ENCODE measurements at regions of chr6 and their contacts with region 1.

Region 1: DNA sequence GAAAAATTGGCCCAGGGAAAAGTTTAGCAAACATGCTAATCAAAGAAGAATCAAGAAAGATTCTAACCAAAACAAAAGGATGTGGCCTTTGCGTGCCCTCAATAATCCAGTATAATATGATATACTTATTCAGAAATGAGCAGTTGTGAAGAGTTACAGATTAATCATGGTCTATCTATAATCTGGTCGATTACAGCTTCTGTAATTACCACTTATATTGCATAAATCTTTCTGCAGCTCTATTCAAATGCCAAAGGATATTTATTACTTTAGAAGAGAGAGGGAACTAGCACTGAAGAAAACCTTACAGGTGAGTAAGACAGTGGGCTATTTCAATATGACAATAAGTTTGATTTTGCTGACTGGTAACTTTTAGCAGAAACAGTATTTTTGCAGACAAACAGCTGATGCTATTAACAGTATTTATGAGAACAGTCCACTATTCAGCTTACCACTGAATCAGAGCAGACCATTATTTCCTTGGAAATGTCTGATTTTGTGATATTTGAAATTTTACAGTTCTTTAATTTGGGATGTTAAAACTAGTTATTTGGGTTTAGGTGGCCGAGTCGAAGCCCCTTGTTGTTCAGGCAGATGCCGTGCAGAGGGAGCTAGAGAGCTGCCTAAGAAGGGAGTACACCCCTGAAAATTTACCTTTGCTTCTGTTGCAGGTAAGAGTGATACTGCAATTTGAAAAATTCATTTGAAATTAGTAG is 92.2 kb downstream of the CEP57L1 start:
- DNase-seq: peak; percentile 52 to 62 (median 59)
- H3K4me3 ChIP-seq: no peak overlapping the region
- H3K4me3 Mint-ChIP-seq: no peak overlapping the region
- H3K27ac ChIP-seq: no peak overlapping the region
- H3K27ac Mint-ChIP-seq: no peak overlapping the region
- H3K4me1 ChIP-seq: no peaks in the 10 kb centered on the region
- H3K4me1 Mint-ChIP-seq: peaks cover 0 to 5% (median 0%) of the 10 kb centered on the region in 4 donors
- H3K27me3 ChIP-seq: peaks cover 6% of the 10 kb centered on the region
- H3K27me3 Mint-ChIP-seq: peaks cover 3 to 10% of the 10 kb centered on the region in 2 donors

Region 2: DNA sequence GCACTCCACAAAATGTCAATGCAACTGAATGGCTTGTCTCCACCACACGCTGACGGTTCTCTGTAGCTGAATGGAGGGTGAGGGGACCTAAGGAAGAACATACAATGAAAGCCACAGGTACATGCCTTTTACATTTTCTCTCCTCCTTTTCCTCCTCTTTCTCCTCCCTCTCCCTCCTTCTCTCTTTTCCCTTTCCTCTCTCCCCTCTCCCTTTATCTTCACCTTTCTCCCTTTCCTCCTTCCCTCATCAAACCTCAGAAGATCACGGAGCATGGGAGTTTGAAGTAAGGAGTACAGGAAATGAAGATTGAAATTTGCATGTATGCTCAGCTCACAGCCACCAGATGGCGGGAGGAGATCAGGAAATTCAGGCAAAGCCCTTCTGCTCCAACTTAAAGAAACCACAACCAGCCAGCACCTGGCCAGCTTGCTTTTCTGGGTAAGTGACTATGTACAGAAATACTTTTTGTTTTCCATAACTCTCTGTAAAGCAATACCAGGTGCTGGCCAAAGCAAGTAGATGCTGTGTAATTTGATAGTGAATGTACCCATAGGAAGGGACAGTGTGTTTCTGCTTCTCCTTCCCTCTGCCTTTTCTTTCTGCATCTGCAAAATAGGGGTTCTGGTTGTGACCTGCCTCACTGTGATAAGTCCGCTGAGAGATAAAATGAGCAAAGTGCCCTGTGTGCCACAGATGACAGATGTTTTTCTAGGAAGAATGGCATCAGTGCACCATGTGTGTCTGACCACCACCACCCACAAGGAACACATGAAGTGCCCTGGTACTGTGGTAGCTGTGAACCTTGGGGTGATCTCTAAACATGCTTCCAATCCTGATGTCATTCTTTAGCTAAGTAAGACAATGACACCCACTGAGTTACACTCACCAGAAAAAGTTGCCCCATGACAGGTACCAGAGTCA is 645.5 kb before region 1 on chr6:
- CTCF ChIA-PET with region 1: interaction called, 5 read pairs
- POLR2A ChIA-PET with region 1: interaction called, 3 read pairs
- intact Hi-C with region 1: loop called (anchors 5 kb)
- DNase-seq: peak; percentile 71 to 74 (median 73)
- H3K4me3 ChIP-seq: no peak overlapping the region
- H3K4me3 Mint-ChIP-seq: peak overlapping the region in 4 of 8 donors; percentile 16 to 71 (median 56)
- H3K27ac ChIP-seq: no peak overlapping the region
- H3K27ac Mint-ChIP-seq: no peak overlapping the region
- H3K4me1 ChIP-seq: peaks cover 8% of the 10 kb centered on the region
- H3K4me1 Mint-ChIP-seq: peaks cover 6 to 17% (median 8%) of the 10 kb centered on the region in 4 donors
- H3K27me3 ChIP-seq: no peaks in the 10 kb centered on the region
- H3K27me3 Mint-ChIP-seq: peaks cover 4 to 6% of the 10 kb centered on the region in 2 donors

Region 3: DNA sequence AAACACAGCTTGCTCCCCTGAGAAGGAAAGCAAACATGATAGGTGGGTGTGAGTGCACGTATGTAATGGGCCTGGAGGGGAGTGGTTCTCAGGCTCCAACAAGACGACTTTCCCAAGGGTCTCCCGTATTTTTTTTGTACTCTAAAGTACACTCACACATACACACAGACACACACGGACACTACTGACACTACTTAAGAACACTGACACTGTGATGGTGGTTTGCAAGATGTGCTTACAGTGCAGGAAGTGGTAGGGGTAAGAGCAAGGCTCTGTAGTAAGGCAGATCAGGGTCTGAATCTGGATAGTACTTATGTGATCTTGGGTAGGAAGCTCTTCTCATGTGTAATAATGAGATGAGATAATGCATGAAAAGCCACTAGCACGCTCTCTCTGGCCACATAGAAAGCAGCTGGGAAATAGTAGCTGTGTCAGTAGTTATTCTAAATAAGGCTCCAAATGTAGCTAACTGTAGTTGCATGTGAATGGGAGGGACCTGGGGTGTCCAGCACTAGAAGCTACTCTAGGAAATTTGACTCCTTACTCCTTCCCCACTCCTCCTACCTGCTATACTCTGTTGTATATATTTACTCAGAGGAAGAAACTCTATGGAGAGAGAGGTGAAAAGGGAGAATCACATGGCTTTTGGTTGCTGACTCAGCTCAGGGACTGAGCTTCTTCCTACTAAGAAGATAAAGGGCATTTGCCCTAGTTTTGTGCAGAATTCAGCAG is 303.8 kb after region 1 on chr6:
- CTCF ChIA-PET with region 1: interaction called, 11 read pairs
- POLR2A ChIA-PET with region 1: no interaction called
- intact Hi-C with region 1: no loop called
- DNase-seq: peak in 4 of 5 donors; percentile 39 to 60 (median 45)
- H3K4me3 ChIP-seq: peak overlapping the region in 1 of 2 donors; percentile 26
- H3K4me3 Mint-ChIP-seq: peak overlapping the region; percentile 22 to 76 (median 58)
- H3K27ac ChIP-seq: peak overlapping the region; percentile 30
- H3K27ac Mint-ChIP-seq: peak overlapping the region; percentile 66 to 90 (median 86)
- H3K4me1 ChIP-seq: peaks cover 20% of the 10 kb centered on the region
- H3K4me1 Mint-ChIP-seq: peaks cover 17 to 22% (median 20%) of the 10 kb centered on the region in 4 donors
- H3K27me3 ChIP-seq: no peaks in the 10 kb centered on the region
- H3K27me3 Mint-ChIP-seq: no peaks in the 10 kb centered on the region

Region 4: DNA sequence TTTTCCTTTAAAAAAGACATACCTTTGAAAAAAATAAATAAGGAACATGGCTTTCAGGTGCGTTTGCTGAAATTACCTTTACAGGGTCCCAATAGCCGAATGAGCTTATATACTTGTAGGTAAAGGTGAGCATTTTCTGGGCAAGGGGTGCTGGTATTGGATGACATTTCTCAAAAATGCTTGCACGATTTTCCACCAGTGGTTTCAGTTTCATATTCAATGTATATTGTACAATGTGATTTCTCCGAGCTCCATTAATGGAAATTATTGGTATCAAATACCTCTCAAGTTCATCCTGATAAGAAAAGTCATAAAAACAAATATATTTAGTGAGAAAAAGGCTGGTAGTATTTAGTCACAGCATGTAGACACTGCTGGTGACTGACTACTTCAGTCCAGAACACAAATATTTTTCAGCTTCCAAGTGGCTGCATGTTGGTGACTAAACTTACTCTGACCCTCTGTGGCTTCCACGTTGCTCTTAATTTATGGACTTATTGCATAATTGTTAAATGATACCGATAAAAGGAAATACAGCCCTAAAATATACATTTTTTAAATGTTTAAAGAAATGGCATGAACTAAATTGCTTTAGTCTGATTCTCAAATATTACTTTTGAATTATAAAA is 328.3 kb after region 1 on chr6:
- CTCF ChIA-PET with region 1: no interaction called
- POLR2A ChIA-PET with region 1: no interaction called
- intact Hi-C with region 1: loop called (anchors 2 kb)
- DNase-seq: peak in 3 of 5 donors; percentile 10 to 14 (median 12)
- H3K4me3 ChIP-seq: peak overlapping the region; percentile 14 to 43
- H3K4me3 Mint-ChIP-seq: peak overlapping the region; percentile 64 to 88 (median 74)
- H3K27ac ChIP-seq: no peak overlapping the region
- H3K27ac Mint-ChIP-seq: peak overlapping the region; percentile 43 to 81 (median 63)
- H3K4me1 ChIP-seq: peaks cover 25% of the 10 kb centered on the region
- H3K4me1 Mint-ChIP-seq: peaks cover 15 to 30% (median 23%) of the 10 kb centered on the region in 4 donors
- H3K27me3 ChIP-seq: no peaks in the 10 kb centered on the region
- H3K27me3 Mint-ChIP-seq: peaks cover 0 to 2% of the 10 kb centered on the region in 2 donors

Region 5: GRCh38 chr6:109526905-109527628 is 339.5 kb after region 1 on chr6:
- CTCF ChIA-PET with region 1: no interaction called
- POLR2A ChIA-PET with region 1: no interaction called
- intact Hi-C with region 1: loop called (anchors 1 kb)
- DNase-seq: peak; percentile 48 to 64 (median 52)
- H3K4me3 ChIP-seq: no peak overlapping the region
- H3K4me3 Mint-ChIP-seq: no peak overlapping the region
- H3K27ac ChIP-seq: no peak overlapping the region
- H3K27ac Mint-ChIP-seq: peak overlapping the region in 2 of 7 donors; percentile 2 to 52
- H3K4me1 ChIP-seq: no peaks in the 10 kb centered on the region
- H3K4me1 Mint-ChIP-seq: peaks cover 0 to 3% (median 0%) of the 10 kb centered on the region in 4 donors
- H3K27me3 ChIP-seq: no peaks in the 10 kb centered on the region
- H3K27me3 Mint-ChIP-seq: peaks cover 0 to 3% of the 10 kb centered on the region in 2 donors

Measured in CD4-positive, alpha-beta memory T cell (primary cell).